Panc1 (cell line): ENCODE measurements at regions of chr18 and their contacts with region 1.

Region 1: GRCh38 chr18:74652392-74652988 is 54.8 kb downstream of the ZNF407 start:
- DNase-seq: peak; percentile 33
- ATAC-seq: peak; percentile 89
- H3K4me3 ChIP-seq: no peak overlapping the region
- H3K27ac ChIP-seq: no peak overlapping the region
- H3K4me1 ChIP-seq: no peaks in the 10 kb centered on the region
- H3K27me3 ChIP-seq: no peaks in the 10 kb centered on the region
- CTCF ChIP-seq: peak; percentile 73; the same call in 1 of the 2 replicates

Region 2: DNA sequence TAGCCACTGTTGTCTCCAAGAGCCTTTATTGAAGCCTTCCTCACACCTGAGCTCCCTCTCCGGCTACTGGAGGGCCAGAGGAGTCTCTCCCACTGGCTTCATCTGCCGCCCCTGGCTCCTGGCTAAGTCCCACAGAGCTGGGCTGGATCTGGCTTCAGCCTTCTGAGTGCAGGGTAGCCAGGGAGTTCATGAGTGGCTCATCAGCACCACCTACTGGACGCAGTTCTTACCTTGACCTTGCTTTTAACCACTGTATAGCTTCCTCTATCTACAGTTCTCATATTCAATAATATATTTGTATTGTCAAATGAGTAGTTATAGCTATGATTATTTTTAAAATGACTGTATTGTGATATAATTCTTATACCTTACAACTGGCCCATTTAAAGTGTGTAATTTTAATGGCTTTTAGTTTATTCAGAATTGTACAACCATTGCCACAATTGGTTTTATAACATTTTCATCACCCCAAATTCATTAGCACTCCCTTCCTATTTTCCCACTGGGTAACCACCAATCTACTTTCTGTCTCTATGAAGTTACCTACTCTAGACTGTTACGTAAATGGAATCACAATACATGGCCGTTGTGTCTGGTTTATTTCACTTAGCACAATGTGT is 100.4 kb before region 1 on chr18:
- CTCF ChIA-PET with region 1: no interaction called
- POLR2A ChIA-PET with region 1: no interaction called
- in situ Hi-C with region 1: no loop called
- intact Hi-C with region 1: no loop called
- DNase-seq: peak; percentile 80
- ATAC-seq: peak; percentile 100
- H3K4me3 ChIP-seq: no peak overlapping the region
- H3K27ac ChIP-seq: no peak overlapping the region
- H3K4me1 ChIP-seq: no peaks in the 10 kb centered on the region
- H3K27me3 ChIP-seq: 0 out of 2 replicates have a peak, but pooled peaks cover 4% of the 10 kb centered on the region
- CTCF ChIP-seq: no peak

Region 3: GRCh38 chr18:74963820-74964446 is 311.4 kb after region 1 on chr18:
- CTCF ChIA-PET with region 1: no interaction called
- POLR2A ChIA-PET with region 1: no interaction called
- in situ Hi-C with region 1: no loop called
- intact Hi-C with region 1: loop called (anchors 2 kb)
- DNase-seq: peak; percentile 73
- ATAC-seq: peak; percentile 98
- H3K4me3 ChIP-seq: no peak overlapping the region
- H3K27ac ChIP-seq: no peak overlapping the region
- H3K4me1 ChIP-seq: no peaks in the 10 kb centered on the region
- H3K27me3 ChIP-seq: no peaks in the 10 kb centered on the region
- CTCF ChIP-seq: peak; percentile 84

Region 4: DNA sequence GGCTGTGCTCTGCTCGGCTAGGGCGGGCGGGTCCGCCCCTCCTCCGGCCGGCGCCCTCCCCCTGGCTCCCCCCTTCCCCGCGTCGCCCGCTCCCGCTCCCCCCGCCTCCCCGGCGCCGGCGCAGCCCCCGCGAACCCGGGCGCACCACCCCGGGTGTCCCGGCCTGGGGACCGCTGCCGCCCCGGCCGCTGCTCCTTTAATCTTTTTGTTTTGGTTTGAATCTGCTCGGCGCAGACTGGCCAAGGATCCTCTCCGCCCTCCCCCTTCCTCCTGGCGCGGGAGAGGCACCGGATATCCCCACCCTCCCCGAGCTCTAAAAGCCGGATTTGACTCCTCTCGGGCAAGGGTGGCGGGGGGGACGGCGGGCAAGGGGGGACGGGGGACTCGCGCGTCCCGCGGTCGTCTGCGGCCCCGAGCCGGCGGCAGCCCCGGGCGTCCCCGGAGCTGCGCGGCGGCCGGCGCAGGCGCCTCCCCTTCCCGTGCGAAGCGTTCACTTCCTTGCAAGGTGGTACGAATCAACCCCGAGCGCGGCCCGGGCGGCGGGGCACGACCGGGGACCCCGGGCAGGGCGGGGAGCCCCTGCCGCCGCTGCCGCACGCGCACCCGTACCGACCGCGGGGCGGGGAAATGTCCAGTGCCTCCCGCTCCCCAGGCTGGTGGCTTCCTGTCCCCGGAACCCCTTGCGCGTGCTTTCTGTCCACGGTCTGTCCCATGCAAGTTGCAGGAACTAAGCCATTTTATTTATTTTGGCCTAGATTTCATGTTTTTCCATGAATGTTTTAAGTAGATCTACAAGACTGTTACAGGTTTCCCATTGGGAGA is 556.9 kb after region 1 on chr18 and contains the start of gene PTGR3:
- CTCF ChIA-PET with region 1: no interaction called
- POLR2A ChIA-PET with region 1: no interaction called
- in situ Hi-C with region 1: no loop called
- intact Hi-C with region 1: loop called (anchors 10 kb)
- DNase-seq: peak; percentile 55
- ATAC-seq: peak; percentile 82
- H3K4me3 ChIP-seq: peak within 1 kb of the TSS; percentile 84 to 89
- H3K27ac ChIP-seq: peak within 1 kb of the TSS; percentile 95
- H3K4me1 ChIP-seq: peaks cover 51% of the 10 kb centered on the region
- H3K27me3 ChIP-seq: no peaks in the 10 kb centered on the region
- CTCF ChIP-seq: no peak
- total RNA-seq, gene PTGR3: 45.0 TPM

Region 5: GRCh38 chr18:75478996-75479880 is 826.7 kb after region 1 on chr18:
- CTCF ChIA-PET with region 1: no interaction called
- POLR2A ChIA-PET with region 1: no interaction called
- in situ Hi-C with region 1: no loop called
- intact Hi-C with region 1: loop called (anchors 5 kb)
- DNase-seq: peak; percentile 39
- ATAC-seq: peak; percentile 88
- H3K4me3 ChIP-seq: no peak overlapping the region
- H3K27ac ChIP-seq: no peak overlapping the region
- H3K4me1 ChIP-seq: no peaks in the 10 kb centered on the region
- H3K27me3 ChIP-seq: no peaks in the 10 kb centered on the region
- CTCF ChIP-seq: peak; percentile 76; the same call in 1 of the 2 replicates